ENCODE measurements at regions of chr19 and their contacts with region 1.

Region 1: GRCh38 chr19:49850473-49851342 is at the start of gene PTOV1:
- DNase-seq: peak; percentile 78 to 97 (median 88)
- ATAC-seq: peak; percentile 93
- H3K4me3 ChIP-seq: peak within 1 kb of the TSS; percentile 89
- H3K4me3 Mint-ChIP-seq: peak within 1 kb of the TSS; percentile 91 to 96 (median 92)
- H3K27ac ChIP-seq: peak within 1 kb of the TSS; percentile 99
- H3K27ac Mint-ChIP-seq: peak within 1 kb of the TSS; percentile 85 to 98 (median 95)
- H3K4me1 ChIP-seq: peaks cover 7 to 25% of the 10 kb centered on the region in 2 donors
- H3K4me1 Mint-ChIP-seq: peaks cover 22 to 37% (median 33%) of the 10 kb centered on the region in 7 donors
- H3K27me3 ChIP-seq: no peaks in the 10 kb centered on the region
- H3K27me3 Mint-ChIP-seq: peaks cover 0 to 11% (median 0%) of the 10 kb centered on the region in 5 donors
- total RNA-seq, gene PTOV1: 92.8 to 170 (median 160) TPM

Region 2: GRCh38 chr19:49869441-49870176 is 18.9 kb after region 1 on chr19:
- CTCF ChIA-PET with region 1: interaction called, 3 read pairs
- POLR2A ChIA-PET with region 1: interaction called, 19 read pairs
- intact Hi-C with region 1: loop called (anchors 1 kb)
- DNase-seq: peak; percentile 83 to 94 (median 87)
- ATAC-seq: peak; percentile 87
- H3K4me3 ChIP-seq: peak overlapping the region; percentile 58
- H3K4me3 Mint-ChIP-seq: peak overlapping the region in 2 of 10 donors; percentile 87
- H3K27ac ChIP-seq: peak overlapping the region; percentile 72
- H3K27ac Mint-ChIP-seq: peak overlapping the region in 5 of 9 donors; percentile 59 to 87 (median 74)
- H3K4me1 ChIP-seq: peaks cover 31 to 38% of the 10 kb centered on the region in 2 donors
- H3K4me1 Mint-ChIP-seq: peaks cover 25 to 51% (median 45%) of the 10 kb centered on the region in 7 donors
- H3K27me3 ChIP-seq: no peaks in the 10 kb centered on the region
- H3K27me3 Mint-ChIP-seq: no peaks in the 10 kb centered on the region